Prostate gland (tissue), 2 donors: ENCODE measurements at regions of chr2 and their contacts with region 1.

Region 1: GRCh38 chr2:1550658-1551316 is 137.5 kb downstream of the TPO start:
- DNase-seq: peak; percentile 33
- H3K4me3 ChIP-seq: no peak overlapping the region
- H3K27ac ChIP-seq: no peak overlapping the region
- H3K4me1 ChIP-seq: no peaks in the 10 kb centered on the region
- H3K27me3 ChIP-seq: no peaks in the 10 kb centered on the region
- CTCF ChIP-seq: peak; percentile 70 to 88 (median 85)
- POLR2A ChIP-seq: no peak

Region 2: GRCh38 chr2:714005-714741 is 836.6 kb before region 1 on chr2:
- intact Hi-C with region 1: loop called (anchors 5 kb)
- DNase-seq: peak; percentile 39
- H3K4me3 ChIP-seq: no peak overlapping the region
- H3K27ac ChIP-seq: no peak overlapping the region
- H3K4me1 ChIP-seq: no peaks in the 10 kb centered on the region
- H3K27me3 ChIP-seq: no peaks in the 10 kb centered on the region
- CTCF ChIP-seq: peak in 3 of 4 experiments; percentile 48 to 52 (median 52)
- POLR2A ChIP-seq: no peak

Region 3: GRCh38 chr2:950080-950966 is 600.5 kb before region 1 on chr2 and contains the start of gene SNTG2:
- intact Hi-C with region 1: loop called (anchors 5 kb)
- DNase-seq: peak; percentile 26
- H3K4me3 ChIP-seq: peak within 1 kb of the TSS; percentile 41 to 71
- H3K27ac ChIP-seq: peak within 1 kb of the TSS in 1 of 2 donors; percentile 57
- H3K4me1 ChIP-seq: no peaks in the 10 kb centered on the region
- H3K27me3 ChIP-seq: no peaks in the 10 kb centered on the region
- CTCF ChIP-seq: no peak
- POLR2A ChIP-seq: no peak
- total RNA-seq, gene SNTG2: 2.0 to 5.0 TPM

Region 4: DNA sequence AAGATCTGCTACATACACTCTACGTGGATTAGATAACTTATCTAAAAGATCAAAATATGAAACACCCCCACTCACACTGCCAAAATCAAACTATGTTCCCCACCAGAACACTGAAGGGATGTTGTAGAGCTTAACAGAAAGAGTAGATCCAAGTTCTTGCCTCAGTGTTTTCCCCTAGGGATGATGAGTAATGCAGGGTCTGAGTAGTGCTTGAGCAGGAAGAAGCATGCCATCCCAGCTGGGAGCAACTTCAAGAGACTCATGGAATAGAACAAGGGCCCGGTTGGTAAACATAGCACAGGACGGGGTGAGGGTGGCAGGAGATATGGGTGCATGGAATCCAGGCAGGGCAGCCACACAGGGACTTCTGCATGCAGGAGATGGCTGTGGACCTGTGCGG is 525.8 kb before region 1 on chr2:
- intact Hi-C with region 1: no loop called
- DNase-seq: no peak
- H3K4me3 ChIP-seq: no peak overlapping the region
- H3K27ac ChIP-seq: no peak overlapping the region
- H3K4me1 ChIP-seq: no peaks in the 10 kb centered on the region
- H3K27me3 ChIP-seq: no peaks in the 10 kb centered on the region
- CTCF ChIP-seq: no peak
- POLR2A ChIP-seq: no peak

Region 5: GRCh38 chr2:1407950-1408675 is 142.7 kb before region 1 on chr2:
- intact Hi-C with region 1: no loop called
- DNase-seq: no peak
- H3K4me3 ChIP-seq: no peak overlapping the region
- H3K27ac ChIP-seq: no peak overlapping the region
- H3K4me1 ChIP-seq: no peaks in the 10 kb centered on the region
- H3K27me3 ChIP-seq: no peaks in the 10 kb centered on the region
- CTCF ChIP-seq: no peak
- POLR2A ChIP-seq: no peak

Region 6: DNA sequence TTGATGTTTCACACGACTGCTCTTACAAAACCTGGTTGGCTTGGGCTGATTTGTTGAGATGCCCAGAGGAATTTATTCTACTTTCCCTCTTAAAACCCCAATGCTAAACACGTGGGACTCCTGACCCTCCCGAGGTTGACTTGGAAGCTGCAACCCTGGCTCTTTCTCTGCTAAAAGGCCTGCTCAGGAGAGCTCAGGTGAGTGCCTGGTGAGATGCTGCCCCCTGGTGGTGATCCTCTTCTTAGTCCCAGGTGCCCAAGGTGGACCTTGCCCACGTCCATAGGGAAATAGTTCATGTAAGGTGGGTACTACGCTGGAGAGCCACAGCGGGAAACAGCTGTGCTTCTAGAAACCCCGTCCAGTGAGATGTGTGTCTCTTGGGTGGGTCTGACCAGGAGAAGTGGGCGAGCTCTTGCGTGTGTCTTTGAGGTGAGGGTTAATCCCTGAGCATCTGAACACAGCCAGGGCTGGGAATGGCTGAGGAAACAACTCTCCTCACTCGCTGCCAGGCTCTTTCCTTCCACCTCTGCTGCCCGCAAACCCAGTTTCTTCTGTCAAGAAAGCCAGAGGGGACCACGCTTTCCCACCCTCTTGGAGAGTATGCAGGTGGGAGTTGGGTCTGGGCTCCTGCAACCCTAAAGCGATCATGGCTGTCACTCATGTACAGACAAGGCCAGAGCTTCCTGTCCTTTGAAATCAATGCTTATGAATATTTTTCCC is 219.1 kb after region 1 on chr2:
- intact Hi-C with region 1: loop called (anchors 5 kb)
- DNase-seq: peak; percentile 75
- H3K4me3 ChIP-seq: no peak overlapping the region
- H3K27ac ChIP-seq: no peak overlapping the region
- H3K4me1 ChIP-seq: no peaks in the 10 kb centered on the region
- H3K27me3 ChIP-seq: no peaks in the 10 kb centered on the region
- CTCF ChIP-seq: peak; percentile 75 to 87 (median 82)
- POLR2A ChIP-seq: no peak